Spleen (tissue), 13 donors: ENCODE measurements at regions of chr9 and their contacts with region 1.

Region 1: GRCh38 chr9:133406480-133407307 is 11.1 kb downstream of the REXO4 start:
- DNase-seq: peak; percentile 93
- H3K4me3 ChIP-seq: no peak overlapping the region
- H3K27ac ChIP-seq: peak overlapping the region in 1 of 8 donors; percentile 17
- H3K4me1 ChIP-seq: peaks cover 0 to 12% (median 2%) of the 10 kb centered on the region in 6 donors
- H3K27me3 ChIP-seq: no peaks in the 10 kb centered on the region
- CTCF ChIP-seq: peak; percentile 82 to 96 (median 92)
- POLR2A ChIP-seq: no peak

Region 2: GRCh38 chr9:133485361-133486260 is 78.9 kb after region 1 on chr9:
- intact Hi-C with region 1: loop called (anchors 2 kb)
- DNase-seq: peak; percentile 80
- H3K4me3 ChIP-seq: peak overlapping the region in 2 of 8 donors; percentile 3 to 46
- H3K27ac ChIP-seq: no peak overlapping the region
- H3K4me1 ChIP-seq: peaks cover 4 to 24% (median 17%) of the 10 kb centered on the region in 6 donors
- H3K27me3 ChIP-seq: peaks cover 0 to 34% (median 0%) of the 10 kb centered on the region in 7 donors
- CTCF ChIP-seq: no peak
- POLR2A ChIP-seq: no peak